Activated CD4-positive, alpha-beta memory T cell treated with anti-CD3 and anti-CD28 coated beads for 36 hours (primary cell): ENCODE measurements at regions of chr15 and their contacts with region 1.

Region 1: DNA sequence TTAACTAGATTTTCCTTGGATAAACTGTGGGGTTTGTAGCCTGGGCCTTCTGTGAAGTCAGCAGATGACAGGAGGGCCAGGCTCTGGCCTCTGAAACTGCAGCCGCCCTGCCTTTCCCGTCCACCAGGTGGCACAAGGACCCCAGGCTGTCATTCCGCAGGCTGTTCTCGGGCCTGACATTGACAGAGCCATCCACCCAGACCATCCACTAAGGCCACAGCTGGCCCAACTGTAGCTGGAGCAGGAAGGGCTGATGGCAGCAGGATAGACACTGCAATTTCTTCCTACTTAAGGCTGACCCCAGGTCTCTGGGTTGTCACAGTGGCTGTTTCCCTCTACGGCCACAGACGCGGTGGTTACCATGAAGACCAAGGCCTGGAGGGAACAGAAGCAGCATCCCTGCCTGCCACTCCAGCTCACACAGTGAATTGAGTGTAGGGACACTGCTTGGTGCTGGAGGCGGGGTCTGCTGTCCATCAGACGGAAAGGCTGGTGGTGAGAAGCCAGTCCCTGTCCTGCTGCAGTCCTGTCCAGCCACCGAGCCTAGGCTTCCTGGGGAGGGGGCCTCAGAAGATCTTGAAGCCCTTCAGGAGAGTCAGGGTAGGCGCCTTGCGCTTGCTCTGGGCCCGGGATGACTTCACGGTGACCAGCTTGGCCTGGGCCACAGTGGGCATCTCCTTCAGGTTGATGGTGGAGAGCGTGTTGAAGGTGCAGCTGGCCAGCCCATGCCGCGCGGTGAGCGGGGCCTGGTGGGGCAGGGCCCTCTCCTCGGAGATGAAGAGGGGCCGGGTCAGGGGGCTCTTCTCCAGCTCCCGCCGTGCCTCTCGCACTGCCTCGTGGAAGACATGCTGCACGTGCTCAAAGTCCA is 9.4 kb downstream of the SLC51B start:
- DNase-seq: peak; percentile 70
- H3K4me3 Mint-ChIP-seq: no peak overlapping the region
- H3K27ac Mint-ChIP-seq: no peak overlapping the region
- H3K4me1 Mint-ChIP-seq: peaks cover 8% of the 10 kb centered on the region
- H3K27me3 Mint-ChIP-seq: no peaks in the 10 kb centered on the region

Region 2: DNA sequence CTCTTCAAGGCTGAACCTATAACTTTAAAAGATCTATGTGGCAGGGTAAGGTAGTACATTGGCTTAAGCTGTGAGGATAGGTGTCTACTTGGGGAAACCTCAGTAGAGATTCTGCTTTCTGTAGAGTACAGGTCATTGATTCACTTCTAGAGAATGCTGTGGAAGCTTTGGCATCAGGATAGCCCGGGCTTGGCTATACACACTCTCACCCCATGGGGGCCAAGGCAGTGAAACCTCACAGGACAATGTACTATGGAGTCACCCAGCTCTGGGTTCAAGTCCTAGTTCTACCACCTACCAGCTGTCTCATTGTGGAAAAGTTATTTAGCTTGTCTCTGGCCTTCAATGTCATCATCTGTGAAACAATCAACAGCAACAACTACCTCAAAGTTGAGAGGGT is 34.1 kb before region 1 on chr15:
- CTCF ChIA-PET with region 1: no interaction called
- POLR2A ChIA-PET with region 1: no interaction called
- intact Hi-C with region 1: no loop called
- DNase-seq: no peak
- H3K4me3 Mint-ChIP-seq: no peak overlapping the region
- H3K27ac Mint-ChIP-seq: no peak overlapping the region
- H3K4me1 Mint-ChIP-seq: peaks cover 2% of the 10 kb centered on the region
- H3K27me3 Mint-ChIP-seq: no peaks in the 10 kb centered on the region

Region 3: DNA sequence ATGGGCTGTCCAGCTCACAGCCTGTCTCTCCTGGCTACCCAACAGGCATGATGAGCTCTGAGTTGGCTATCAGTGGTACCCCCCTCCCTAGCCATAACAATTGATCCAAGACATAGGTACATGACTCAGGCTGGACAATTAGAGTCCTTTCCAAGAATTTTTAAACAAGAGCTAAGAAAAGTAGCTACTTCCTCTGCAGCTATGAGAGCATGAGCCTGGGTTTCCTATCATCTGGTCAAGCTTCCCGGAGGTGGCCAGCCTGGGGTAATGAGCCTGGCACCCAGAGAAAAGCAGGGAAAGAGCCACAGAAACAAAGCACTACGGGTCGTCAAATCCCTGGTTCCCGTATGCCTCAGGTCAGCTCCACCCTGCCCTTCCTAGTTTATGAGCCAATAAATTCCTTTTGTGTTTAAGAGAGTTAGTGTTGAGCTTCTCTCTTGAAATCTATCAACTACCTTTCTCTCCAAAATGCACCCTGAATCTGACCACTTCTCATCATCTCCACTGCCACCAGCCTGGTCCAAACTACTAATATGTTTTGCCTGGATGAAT is 11.7 kb before region 1 on chr15:
- CTCF ChIA-PET with region 1: interaction called, 10 read pairs
- POLR2A ChIA-PET with region 1: no interaction called
- intact Hi-C with region 1: no loop called
- DNase-seq: no peak
- H3K4me3 Mint-ChIP-seq: no peak overlapping the region
- H3K27ac Mint-ChIP-seq: no peak overlapping the region
- H3K4me1 Mint-ChIP-seq: peaks cover 4% of the 10 kb centered on the region
- H3K27me3 Mint-ChIP-seq: peaks cover 1% of the 10 kb centered on the region

Region 4: DNA sequence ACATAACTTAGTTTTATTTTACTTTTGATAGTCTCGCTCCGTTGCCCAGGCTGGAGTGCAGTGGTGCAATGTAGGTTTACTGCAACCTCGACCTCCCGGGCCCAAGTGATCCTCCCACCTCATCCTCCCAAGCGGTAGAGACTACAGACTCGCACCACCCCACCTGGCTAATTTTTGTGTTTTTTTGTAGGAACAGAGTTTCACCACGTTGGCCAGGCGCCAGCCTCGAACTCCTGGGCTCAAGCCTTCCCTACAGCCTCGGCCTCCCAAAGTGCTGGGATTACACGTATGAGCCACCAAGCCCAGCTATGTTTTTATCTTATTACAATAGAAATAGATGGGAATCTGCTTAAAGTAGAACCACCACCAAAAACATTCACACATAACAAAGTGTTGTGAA is 244.2 kb after region 1 on chr15:
- CTCF ChIA-PET with region 1: interaction called, 13 read pairs
- POLR2A ChIA-PET with region 1: no interaction called
- intact Hi-C with region 1: loop called (anchors 2 kb)
- DNase-seq: no peak
- H3K4me3 Mint-ChIP-seq: peak overlapping the region; percentile 60
- H3K27ac Mint-ChIP-seq: peak overlapping the region; percentile 81
- H3K4me1 Mint-ChIP-seq: peaks cover 25% of the 10 kb centered on the region
- H3K27me3 Mint-ChIP-seq: peaks cover 5% of the 10 kb centered on the region

Region 5: GRCh38 chr15:65368302-65369211 is 314.0 kb after region 1 on chr15:
- CTCF ChIA-PET with region 1: no interaction called
- POLR2A ChIA-PET with region 1: no interaction called
- intact Hi-C with region 1: no loop called
- DNase-seq: no peak
- H3K4me3 Mint-ChIP-seq: no peak overlapping the region
- H3K27ac Mint-ChIP-seq: no peak overlapping the region
- H3K4me1 Mint-ChIP-seq: no peaks in the 10 kb centered on the region
- H3K27me3 Mint-ChIP-seq: peaks cover 2% of the 10 kb centered on the region